ENCODE measurements at regions of chr14 and their contacts with region 1.

Region 1: DNA sequence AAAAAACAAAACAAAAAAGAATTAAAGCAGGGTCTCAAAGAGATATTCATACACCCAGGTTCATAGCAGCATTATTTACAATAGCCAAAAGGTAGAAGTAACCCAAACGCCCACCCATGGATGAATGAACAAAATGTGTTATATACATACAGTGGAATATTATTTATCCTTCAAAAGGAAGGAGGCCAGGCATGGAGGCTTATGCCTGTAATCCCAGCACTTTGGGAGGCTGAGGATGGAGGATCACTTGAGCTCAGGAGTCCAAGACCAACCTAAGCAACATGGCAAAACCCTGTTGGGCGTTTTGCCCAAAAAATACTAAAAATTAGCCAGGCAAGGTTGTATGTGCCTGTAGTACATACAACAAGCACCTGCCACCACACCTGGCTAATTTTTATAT is 4.6 kb downstream of the METTL3 start:
- DNase-seq: no peak
- H3K4me3 ChIP-seq: no peak overlapping the region
- H3K27ac ChIP-seq: no peak overlapping the region
- H3K4me1 ChIP-seq: peaks cover 2% of the 10 kb centered on the region
- H3K27me3 ChIP-seq: no peaks in the 10 kb centered on the region
- CTCF ChIP-seq: no peak
- EP300 ChIP-seq: no peak
- POLR2A ChIP-seq: no peak

Region 2: DNA sequence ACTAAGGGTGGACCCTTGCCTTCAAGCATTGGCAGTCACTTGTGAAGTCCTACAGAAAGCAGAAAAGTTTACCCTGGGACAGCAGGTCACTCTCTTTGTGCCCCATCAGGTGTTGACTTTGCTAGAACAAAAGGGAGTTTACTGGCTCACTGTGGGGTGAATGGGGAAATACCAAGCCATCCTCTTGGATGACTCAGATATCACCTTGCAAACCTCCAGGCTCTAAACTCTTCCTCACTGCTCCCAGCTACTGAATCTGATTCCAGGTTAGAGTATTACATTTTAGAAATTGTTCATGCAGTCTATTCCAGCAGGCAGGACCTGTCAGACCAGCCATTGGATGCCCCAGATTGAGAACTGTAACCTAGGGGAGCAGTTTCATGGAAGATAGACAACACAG is 745.6 kb before region 1 on chr14:
- intact Hi-C with region 1: no loop called
- DNase-seq: no peak
- H3K4me3 ChIP-seq: no peak overlapping the region
- H3K27ac ChIP-seq: no peak overlapping the region
- H3K4me1 ChIP-seq: no peaks in the 10 kb centered on the region
- H3K27me3 ChIP-seq: no peaks in the 10 kb centered on the region
- CTCF ChIP-seq: no peak
- EP300 ChIP-seq: no peak
- POLR2A ChIP-seq: no peak

Region 3: DNA sequence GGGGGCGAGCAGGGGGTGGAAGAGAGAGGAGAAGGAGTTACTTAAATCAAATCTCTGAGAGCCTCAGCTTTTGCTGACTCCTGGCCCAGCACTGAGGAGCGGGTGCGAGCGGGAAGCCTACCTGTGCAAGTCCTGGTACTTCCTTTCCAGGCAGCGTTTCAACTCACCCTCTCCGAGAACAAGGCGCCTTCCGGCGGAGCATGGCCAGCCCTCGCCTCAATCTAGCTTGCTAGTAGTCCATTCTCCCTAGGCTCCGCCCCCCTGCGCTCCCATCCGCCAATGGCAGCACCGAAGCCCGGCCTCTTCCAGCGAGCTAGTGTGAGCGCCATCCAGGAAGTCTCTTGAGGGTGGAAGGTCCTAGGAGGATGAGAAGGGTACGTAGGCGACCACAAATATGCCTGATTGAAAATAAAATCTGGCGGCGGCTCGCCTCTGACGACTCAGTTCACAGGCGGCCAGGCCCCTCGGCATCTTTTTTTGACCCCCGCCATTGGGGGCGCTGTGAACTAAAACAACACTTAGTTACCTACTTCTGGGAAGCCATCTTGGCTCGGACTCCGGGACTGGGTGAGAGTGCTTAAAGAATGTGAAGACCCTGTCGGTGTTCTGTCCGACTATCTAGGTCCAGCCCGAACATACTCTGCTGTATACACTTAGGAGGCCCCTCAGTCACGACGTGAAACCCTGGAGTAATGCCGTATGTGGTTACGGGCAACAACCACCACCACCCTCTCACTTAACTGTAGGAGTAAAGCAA is 50.5 kb before region 1 on chr14 and contains the start of gene CHD8:
- intact Hi-C with region 1: no loop called
- DNase-seq: peak; percentile 98 to 99 (median 99)
- H3K4me3 ChIP-seq: peak within 1 kb of the TSS; percentile 91
- H3K27ac ChIP-seq: peak within 1 kb of the TSS; percentile 65 to 93
- H3K4me1 ChIP-seq: peaks cover 4% of the 10 kb centered on the region
- H3K27me3 ChIP-seq: no peaks in the 10 kb centered on the region
- CTCF ChIP-seq: peak; percentile 37 to 71 (median 56)
- EP300 ChIP-seq: no peak
- POLR2A ChIP-seq: peak; percentile 47
- total RNA-seq, gene CHD8: 36.0 to 79.3 (median 66.9) TPM

Region 4: GRCh38 chr14:21476925-21477681 is 29.5 kb before region 1 on chr14 and contains the starts of genes RAB2B and TOX4:
- intact Hi-C with region 1: loop called in 1 of 4 experiments (anchors 2 kb)
- DNase-seq: peak; percentile 92 to 96 (median 94)
- H3K4me3 ChIP-seq: peak within 1 kb of the TSS; percentile 79
- H3K27ac ChIP-seq: peak within 1 kb of the TSS; percentile 58 to 66
- H3K4me1 ChIP-seq: peaks cover 5% of the 10 kb centered on the region
- H3K27me3 ChIP-seq: no peaks in the 10 kb centered on the region
- CTCF ChIP-seq: peak; percentile 96 to 99 (median 98)
- EP300 ChIP-seq: peak; percentile 35
- POLR2A ChIP-seq: peak; percentile 80
- total RNA-seq, gene RAB2B: 18.4 to 28.7 (median 25.0) TPM
- total RNA-seq, gene TOX4: 22.7 to 75.3 (median 64.4) TPM